PC-9 (cell line): ENCODE measurements at regions of chr10 and their contacts with region 1.

Region 1: GRCh38 chr10:67884313-67884841 is at the start of gene SIRT1:
- DNase-seq: peak; percentile 75 to 98
- H3K4me3 ChIP-seq: peak within 1 kb of the TSS; percentile 70
- H3K27ac ChIP-seq: peak within 1 kb of the TSS; percentile 63
- H3K4me1 ChIP-seq: peaks cover 17% of the 10 kb centered on the region
- H3K27me3 ChIP-seq: no peaks in the 10 kb centered on the region
- CTCF ChIP-seq: no peak
- total RNA-seq, gene SIRT1: 15.8 and 17.2 TPM in 2 replicates

Region 2: GRCh38 chr10:67837541-67838314 is 46.6 kb before region 1 on chr10 and contains the start of gene DNAJC12:
- CTCF ChIA-PET with region 1: no interaction called
- POLR2A ChIA-PET with region 1: no interaction called
- intact Hi-C with region 1: no loop called
- DNase-seq: no peak
- H3K4me3 ChIP-seq: no peak within 1 kb of the TSS
- H3K27ac ChIP-seq: no peak within 1 kb of the TSS
- H3K4me1 ChIP-seq: no peaks in the 10 kb centered on the region
- H3K27me3 ChIP-seq: no peaks in the 10 kb centered on the region
- CTCF ChIP-seq: no peak
- total RNA-seq, gene DNAJC12: 0.33 TPM in 1 of 2 replicates, not detected in the other

Region 3: GRCh38 chr10:67864607-67865371 is 19.6 kb before region 1 on chr10:
- CTCF ChIA-PET with region 1: no interaction called
- POLR2A ChIA-PET with region 1: no interaction called
- intact Hi-C with region 1: no loop called
- DNase-seq: no peak
- H3K4me3 ChIP-seq: no peak overlapping the region
- H3K27ac ChIP-seq: no peak overlapping the region
- H3K4me1 ChIP-seq: no peaks in the 10 kb centered on the region
- H3K27me3 ChIP-seq: no peaks in the 10 kb centered on the region
- CTCF ChIP-seq: no peak

Region 4: DNA sequence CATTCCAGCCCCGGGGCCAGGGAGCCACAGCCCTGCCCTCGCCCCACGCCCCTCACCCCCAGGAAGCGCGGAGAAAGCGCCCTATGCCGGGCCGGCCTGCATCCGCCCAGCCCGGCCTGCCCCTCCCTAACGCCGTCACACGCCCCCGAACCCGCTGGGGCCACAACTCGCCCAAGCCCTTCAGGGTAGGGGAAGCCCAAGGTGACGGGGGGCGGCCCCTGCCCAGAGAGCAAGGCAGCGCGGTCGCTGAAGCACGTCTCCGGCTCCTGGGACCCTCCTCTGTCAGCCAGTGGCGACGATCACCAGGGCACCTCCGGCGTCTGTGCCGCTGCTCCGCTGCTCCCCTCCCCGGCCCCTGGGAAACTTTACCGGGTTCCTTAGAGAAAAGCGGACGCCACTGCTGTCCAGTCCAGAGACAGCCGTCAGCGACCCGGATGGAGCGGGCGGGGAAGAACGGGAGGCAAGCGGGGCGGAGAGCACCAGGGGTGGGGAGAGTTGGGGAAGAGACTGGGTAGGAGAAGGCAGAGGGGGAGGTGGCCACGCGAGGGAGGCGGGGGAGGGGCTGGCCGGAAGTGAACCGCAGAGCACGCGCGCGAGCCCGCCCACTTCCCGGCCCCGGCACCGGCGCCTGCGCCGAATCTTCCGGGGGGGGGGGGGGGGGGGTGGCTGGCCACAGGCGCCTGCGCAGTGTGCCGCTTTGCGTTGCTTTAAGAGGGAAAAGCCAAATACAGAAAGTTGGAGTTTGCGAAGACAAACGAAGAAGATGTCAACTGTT is 190.6 kb after region 1 on chr10 and contains the start of gene HERC4:
- CTCF ChIA-PET with region 1: no interaction called
- POLR2A ChIA-PET with region 1: interaction called, 15 read pairs
- intact Hi-C with region 1: no loop called
- DNase-seq: peak; percentile 82 to 92
- H3K4me3 ChIP-seq: peak within 1 kb of the TSS; percentile 97
- H3K27ac ChIP-seq: peak within 1 kb of the TSS; percentile 95
- H3K4me1 ChIP-seq: peaks cover 36% of the 10 kb centered on the region
- H3K27me3 ChIP-seq: no peaks in the 10 kb centered on the region
- CTCF ChIP-seq: no peak
- total RNA-seq, gene HERC4: 115 and 116 TPM in 2 replicates

Region 5: DNA sequence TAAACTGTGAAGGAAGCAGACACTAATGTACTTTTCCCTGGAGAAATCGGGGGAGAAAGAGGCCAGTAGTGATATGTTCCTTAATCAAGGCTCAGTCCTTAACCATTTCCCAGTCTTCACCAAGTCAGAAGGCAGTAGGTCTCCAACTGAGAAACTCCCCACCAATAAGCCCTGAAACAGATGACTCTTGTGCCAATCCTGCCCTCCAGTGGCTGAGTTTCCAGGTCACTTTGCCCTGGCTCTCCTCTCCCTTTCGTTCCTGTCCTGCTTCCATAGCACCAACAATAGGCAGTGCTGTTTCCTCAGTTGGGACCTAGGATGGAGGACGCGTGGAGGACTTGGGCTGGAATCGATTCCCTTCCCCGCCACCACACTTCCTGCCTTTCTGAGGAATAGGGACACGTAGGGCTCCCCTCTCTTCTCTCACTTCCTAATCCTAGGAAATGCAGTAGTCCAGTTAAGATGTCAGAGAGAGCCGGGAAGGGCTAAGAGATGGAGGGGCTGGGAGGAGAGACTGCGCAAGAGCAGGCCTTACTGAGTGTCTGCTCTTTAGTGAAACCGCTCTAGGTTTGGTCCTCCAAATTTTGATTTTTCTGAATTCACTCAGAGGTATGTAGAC is 324.2 kb after region 1 on chr10:
- CTCF ChIA-PET with region 1: interaction called, 11 read pairs
- POLR2A ChIA-PET with region 1: no interaction called
- intact Hi-C with region 1: no loop called
- DNase-seq: peak; percentile 63 to 78
- H3K4me3 ChIP-seq: no peak overlapping the region
- H3K27ac ChIP-seq: no peak overlapping the region
- H3K4me1 ChIP-seq: peaks cover 7% of the 10 kb centered on the region
- H3K27me3 ChIP-seq: no peaks in the 10 kb centered on the region
- CTCF ChIP-seq: peak; percentile 82